Activated CD8-positive, alpha-beta T cell treated with anti-CD3 and anti-CD28 coated beads for 36 hours (primary cell): ENCODE measurements at regions of chr1 and their contacts with region 1.

Region 1: DNA sequence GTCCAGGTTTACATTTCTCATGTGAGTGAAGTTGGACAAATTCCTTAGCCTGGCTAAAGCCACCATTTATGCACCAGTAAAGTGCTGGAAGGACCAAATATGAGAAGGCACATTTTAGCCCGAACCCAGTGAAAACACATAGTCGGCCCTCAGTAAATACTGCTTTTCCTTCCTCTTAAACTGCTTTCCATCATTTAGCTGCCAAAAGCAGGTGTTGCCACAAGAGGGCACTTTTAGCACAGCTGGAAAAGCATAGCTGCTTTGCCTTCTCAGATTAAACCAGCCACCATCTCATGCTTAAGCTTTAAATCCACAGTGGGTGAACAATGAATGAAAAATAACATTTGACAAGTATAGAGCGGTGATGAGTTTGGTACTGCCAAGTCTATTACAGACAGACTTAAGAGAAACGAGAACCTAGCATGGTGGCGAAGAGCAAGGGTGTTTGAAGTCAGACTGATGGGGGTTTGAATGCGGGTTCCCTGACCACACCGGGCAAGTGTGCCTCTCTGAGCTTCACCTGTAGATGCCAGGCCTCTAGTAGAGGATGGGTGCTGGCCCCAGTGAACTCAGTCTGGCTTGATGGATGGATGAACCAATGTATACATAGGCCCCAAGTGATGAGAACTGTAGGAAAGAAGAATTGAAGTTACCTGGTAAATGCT is 57.8 kb downstream of the SLC35D1 start:
- DNase-seq: peak; percentile 83
- ATAC-seq: peak; percentile 88
- H3K4me3 Mint-ChIP-seq: no peak overlapping the region
- H3K27ac Mint-ChIP-seq: no peak overlapping the region
- H3K4me1 Mint-ChIP-seq: peaks cover 17% of the 10 kb centered on the region
- H3K27me3 Mint-ChIP-seq: no peaks in the 10 kb centered on the region
- CTCF ChIP-seq: peak; percentile 71

Region 2: GRCh38 chr1:66764994-66765578 is 231.1 kb before region 1 on chr1:
- CTCF ChIA-PET with region 1: interaction called, 21 read pairs
- POLR2A ChIA-PET with region 1: no interaction called
- intact Hi-C with region 1: loop called (anchors 5 kb)
- DNase-seq: peak; percentile 78
- ATAC-seq: peak; percentile 76
- H3K4me3 Mint-ChIP-seq: no peak overlapping the region
- H3K27ac Mint-ChIP-seq: no peak overlapping the region
- H3K4me1 Mint-ChIP-seq: peaks cover 16% of the 10 kb centered on the region
- H3K27me3 Mint-ChIP-seq: no peaks in the 10 kb centered on the region
- CTCF ChIP-seq: peak; percentile 86

Region 3: GRCh38 chr1:67013573-67013972 is 17.4 kb after region 1 on chr1:
- CTCF ChIA-PET with region 1: interaction called, 14 read pairs
- POLR2A ChIA-PET with region 1: no interaction called
- intact Hi-C with region 1: no loop called
- DNase-seq: peak; percentile 11
- ATAC-seq: peak; percentile 71
- H3K4me3 Mint-ChIP-seq: no peak overlapping the region
- H3K27ac Mint-ChIP-seq: peak overlapping the region; percentile 76
- H3K4me1 Mint-ChIP-seq: peaks cover 6% of the 10 kb centered on the region
- H3K27me3 Mint-ChIP-seq: no peaks in the 10 kb centered on the region
- CTCF ChIP-seq: no peak

Region 4: GRCh38 chr1:67019600-67020136 is 23.5 kb after region 1 on chr1:
- CTCF ChIA-PET with region 1: interaction called, 10 read pairs
- POLR2A ChIA-PET with region 1: no interaction called
- intact Hi-C with region 1: no loop called
- DNase-seq: no peak
- ATAC-seq: no peak
- H3K4me3 Mint-ChIP-seq: no peak overlapping the region
- H3K27ac Mint-ChIP-seq: peak overlapping the region; percentile 14
- H3K4me1 Mint-ChIP-seq: peaks cover 9% of the 10 kb centered on the region
- H3K27me3 Mint-ChIP-seq: no peaks in the 10 kb centered on the region
- CTCF ChIP-seq: no peak

Region 5: GRCh38 chr1:67040410-67040809 is 44.3 kb after region 1 on chr1:
- CTCF ChIA-PET with region 1: no interaction called
- POLR2A ChIA-PET with region 1: no interaction called
- intact Hi-C with region 1: no loop called
- DNase-seq: no peak
- ATAC-seq: no peak
- H3K4me3 Mint-ChIP-seq: no peak overlapping the region
- H3K27ac Mint-ChIP-seq: no peak overlapping the region
- H3K4me1 Mint-ChIP-seq: peaks cover 5% of the 10 kb centered on the region
- H3K27me3 Mint-ChIP-seq: no peaks in the 10 kb centered on the region
- CTCF ChIP-seq: no peak

Region 6: GRCh38 chr1:67126111-67126746 is 130.1 kb after region 1 on chr1:
- CTCF ChIA-PET with region 1: interaction called, 10 read pairs
- POLR2A ChIA-PET with region 1: no interaction called
- intact Hi-C with region 1: no loop called
- DNase-seq: no peak
- ATAC-seq: no peak
- H3K4me3 Mint-ChIP-seq: no peak overlapping the region
- H3K27ac Mint-ChIP-seq: no peak overlapping the region
- H3K4me1 Mint-ChIP-seq: peaks cover 4% of the 10 kb centered on the region
- H3K27me3 Mint-ChIP-seq: no peaks in the 10 kb centered on the region
- CTCF ChIP-seq: no peak